Activated T-helper 2 cell treated with anti-CD3 and anti-CD28 coated beads, Interferon-gamma antibody, Interleukin-2, Interleukin-4, amounts not matched to agents 10 μg/mL and 5 μg/mL and 100 μg/mL, durations not matched to agents 14 hours and 24 hours and 36 hours (primary cell): ENCODE measurements at regions of chr2 and their contacts with region 1.

Region 1: GRCh38 chr2:187509667-187510417 is 44.4 kb downstream of the TFPI start:
- DNase-seq: no peak
- H3K4me3 Mint-ChIP-seq: no peak overlapping the region
- H3K27ac Mint-ChIP-seq: peak overlapping the region; percentile 80
- H3K4me1 Mint-ChIP-seq: peaks cover 14% of the 10 kb centered on the region
- H3K27me3 Mint-ChIP-seq: peaks cover 4% of the 10 kb centered on the region

Region 2: DNA sequence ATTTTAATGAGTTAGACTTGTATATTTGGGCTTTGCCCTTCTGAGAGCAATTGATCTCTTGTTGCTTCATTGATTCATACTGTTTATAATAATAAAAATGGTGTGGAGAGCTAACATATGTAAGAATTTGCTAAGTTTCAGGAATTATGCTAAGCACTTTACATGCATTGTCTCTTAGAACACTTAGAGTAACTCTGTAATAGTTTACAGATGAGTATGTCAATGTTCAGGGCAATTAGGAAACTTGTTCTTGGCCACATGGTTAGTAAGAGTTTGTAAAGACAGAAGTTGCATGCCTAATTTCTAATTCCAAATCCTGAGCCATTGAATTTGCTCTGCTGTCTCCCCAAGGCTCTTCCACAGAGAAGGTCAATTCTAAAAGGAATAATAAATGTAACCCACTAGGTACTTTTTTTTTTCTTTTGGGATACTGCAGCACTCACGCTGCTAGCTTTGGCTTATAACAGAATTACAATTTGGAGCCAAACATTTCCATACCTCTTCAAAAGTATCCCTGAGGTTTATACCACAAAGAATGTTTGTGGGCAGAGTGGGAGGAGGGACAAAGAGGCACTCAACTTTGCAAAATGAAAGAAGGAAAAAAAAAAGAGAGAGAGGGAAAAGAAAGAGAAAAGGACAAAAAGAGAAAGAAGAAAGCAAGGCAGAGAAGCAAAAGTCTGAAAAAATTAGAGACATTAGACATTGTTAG is 294.2 kb before region 1 on chr2:
- intact Hi-C with region 1: no loop called
- DNase-seq: no peak
- H3K4me3 Mint-ChIP-seq: no peak overlapping the region
- H3K27ac Mint-ChIP-seq: no peak overlapping the region
- H3K4me1 Mint-ChIP-seq: no peaks in the 10 kb centered on the region
- H3K27me3 Mint-ChIP-seq: no peaks in the 10 kb centered on the region

Region 3: GRCh38 chr2:187525163-187525900 is 15.5 kb after region 1 on chr2:
- intact Hi-C with region 1: loop called (anchors 2 kb)
- DNase-seq: no peak
- H3K4me3 Mint-ChIP-seq: no peak overlapping the region
- H3K27ac Mint-ChIP-seq: no peak overlapping the region
- H3K4me1 Mint-ChIP-seq: no peaks in the 10 kb centered on the region
- H3K27me3 Mint-ChIP-seq: no peaks in the 10 kb centered on the region

Region 4: DNA sequence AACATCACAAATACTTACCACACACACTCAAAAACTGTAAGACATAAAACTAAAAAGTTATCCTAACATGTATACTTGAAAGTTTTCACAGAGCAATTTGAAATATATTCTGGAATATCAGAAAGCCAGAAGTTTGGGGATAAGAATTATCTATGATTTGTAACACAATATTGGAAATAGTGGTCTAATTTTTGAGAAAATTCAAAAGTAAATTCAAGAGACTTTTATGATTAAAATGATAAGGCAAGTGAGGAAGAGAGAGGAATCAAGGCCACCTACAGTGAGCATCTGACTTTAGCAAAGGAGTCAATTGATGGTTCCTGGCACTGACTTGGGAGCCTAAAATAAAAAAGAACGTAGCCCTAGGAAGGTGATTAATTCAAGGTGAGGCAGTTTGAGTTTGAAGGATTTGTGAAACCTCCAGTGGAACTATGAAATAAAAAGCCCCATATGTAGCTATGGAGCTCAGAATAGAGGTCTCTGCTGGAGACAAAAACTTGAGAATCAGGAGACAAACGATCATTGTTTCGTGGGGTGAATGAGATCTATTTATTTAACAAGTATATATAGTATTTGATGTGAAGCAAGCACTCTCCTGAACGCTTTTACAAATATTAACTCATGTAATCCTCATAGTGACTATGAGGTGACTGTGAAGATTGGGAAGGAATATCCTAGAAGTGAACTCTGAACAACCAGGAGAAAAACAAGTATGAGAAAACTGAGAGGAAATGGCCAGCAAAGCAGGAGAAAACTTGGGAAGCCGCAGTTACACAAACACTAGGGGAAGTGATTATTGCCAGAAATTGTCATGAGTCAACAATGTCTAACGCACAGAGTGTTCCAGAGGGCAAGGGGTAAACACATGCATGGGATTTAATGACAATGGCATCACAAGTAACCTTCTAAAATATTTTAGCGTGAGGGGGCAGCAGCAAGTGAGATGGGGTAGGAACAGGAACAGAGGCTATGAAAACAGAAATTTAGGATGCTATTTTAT is 31.5 kb after region 1 on chr2:
- intact Hi-C with region 1: no loop called
- DNase-seq: no peak
- H3K4me3 Mint-ChIP-seq: no peak overlapping the region
- H3K27ac Mint-ChIP-seq: no peak overlapping the region
- H3K4me1 Mint-ChIP-seq: no peaks in the 10 kb centered on the region
- H3K27me3 Mint-ChIP-seq: peaks cover 1% of the 10 kb centered on the region

Region 5: DNA sequence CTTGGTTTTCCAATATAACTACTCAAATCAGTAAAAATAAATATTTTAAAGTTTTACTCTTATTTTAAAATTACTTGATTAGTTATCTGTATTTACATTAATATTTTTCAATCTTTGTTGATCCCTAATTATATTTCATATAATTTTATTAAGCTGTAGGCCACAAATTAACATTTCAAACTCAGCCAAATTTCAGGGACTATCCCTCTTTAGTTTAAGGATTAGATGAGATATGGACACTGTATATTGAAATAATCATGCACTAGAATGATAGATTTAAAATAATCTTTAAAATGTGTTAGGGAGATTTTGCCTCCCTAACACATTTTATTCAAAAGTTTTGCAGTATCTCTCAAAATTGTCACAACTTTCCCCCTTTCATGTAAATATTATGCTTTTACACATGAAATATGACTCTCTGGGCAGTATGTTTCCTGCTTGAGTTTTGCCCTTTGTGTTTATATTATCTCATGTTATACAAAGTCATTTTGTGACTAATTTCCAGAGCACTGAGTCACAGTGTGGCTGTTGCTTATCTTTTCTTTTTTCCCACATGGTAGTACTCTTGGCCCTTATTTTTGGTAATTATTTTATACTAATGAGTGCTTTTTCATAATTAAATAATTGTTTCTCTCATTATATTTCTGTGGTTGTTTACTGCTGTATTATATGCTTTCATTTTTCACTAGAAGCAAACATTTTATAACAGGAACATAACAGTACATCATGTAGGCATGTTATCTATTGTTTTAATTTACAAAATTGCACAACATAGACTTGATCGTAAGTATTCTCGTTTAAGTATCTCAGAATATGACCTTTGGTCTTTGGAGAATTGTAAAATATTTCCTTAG is 43.2 kb after region 1 on chr2:
- intact Hi-C with region 1: loop called (anchors 2 kb)
- DNase-seq: no peak
- H3K4me3 Mint-ChIP-seq: no peak overlapping the region
- H3K27ac Mint-ChIP-seq: no peak overlapping the region
- H3K4me1 Mint-ChIP-seq: peaks cover 12% of the 10 kb centered on the region
- H3K27me3 Mint-ChIP-seq: peaks cover 20% of the 10 kb centered on the region